ENCODE measurements at regions of chr22 and their contacts with region 1.

Region 1: DNA sequence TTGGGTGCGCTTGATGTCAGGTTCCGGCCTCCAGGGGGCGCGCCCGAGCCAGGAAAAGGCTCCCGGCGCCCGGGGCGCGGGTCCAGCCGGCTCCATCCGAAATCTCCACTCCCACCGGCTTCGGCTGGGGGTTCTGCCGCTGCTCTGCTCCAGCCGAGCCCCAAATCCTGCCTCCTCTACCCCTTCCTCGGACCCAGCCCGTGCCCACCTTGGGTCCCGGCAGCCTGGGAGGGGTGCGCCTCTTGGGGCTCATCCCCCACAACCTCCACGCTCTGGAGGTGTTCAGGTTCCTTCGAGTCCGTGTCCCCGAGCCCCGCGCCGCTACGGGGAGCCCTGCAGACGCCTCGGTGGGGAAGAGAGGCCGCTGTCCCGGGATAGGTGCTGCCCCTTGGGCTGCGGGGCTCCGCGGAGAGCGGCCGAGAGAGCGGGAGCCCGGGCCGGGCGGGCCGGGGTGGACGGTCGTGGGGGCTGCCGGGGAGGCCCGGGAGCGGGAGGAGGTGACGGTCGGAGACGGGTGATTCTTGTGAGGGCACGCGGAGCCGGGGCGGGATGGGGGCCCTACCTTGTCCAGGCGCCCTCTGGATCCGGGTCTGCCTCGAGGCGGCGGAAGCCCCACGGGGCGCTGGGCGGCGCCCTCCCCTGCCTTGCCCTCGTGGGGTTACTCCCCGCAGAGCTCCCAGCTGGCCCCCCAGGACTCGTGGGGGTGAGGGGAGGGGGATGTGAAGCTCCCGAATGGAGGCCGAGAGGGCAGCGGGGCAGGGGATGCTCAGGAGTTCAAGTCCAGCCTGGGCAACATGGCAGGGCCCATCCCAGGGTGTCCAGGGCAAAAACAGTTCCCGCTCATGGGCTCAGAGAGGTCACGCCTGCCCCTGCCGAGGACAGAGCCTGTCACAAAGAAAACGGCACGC is 13.2 kb upstream of the CYB5R3 start:
- DNase-seq: peak; percentile 86 to 91
- ATAC-seq: peak; percentile 89 to 97 (median 94)
- H3K4me3 ChIP-seq: peak overlapping the region; percentile 44 to 94 (median 62)
- H3K27ac ChIP-seq: peak overlapping the region in 9 of 10 donors; percentile 24 to 81 (median 70)
- H3K4me1 ChIP-seq: peaks cover 0 to 17% (median 11%) of the 10 kb centered on the region in 9 donors
- H3K27me3 ChIP-seq: peaks cover 0 to 10% (median 0%) of the 10 kb centered on the region in 7 donors
- CTCF ChIP-seq: peak; percentile 38 to 92 (median 86)

Region 2: DNA sequence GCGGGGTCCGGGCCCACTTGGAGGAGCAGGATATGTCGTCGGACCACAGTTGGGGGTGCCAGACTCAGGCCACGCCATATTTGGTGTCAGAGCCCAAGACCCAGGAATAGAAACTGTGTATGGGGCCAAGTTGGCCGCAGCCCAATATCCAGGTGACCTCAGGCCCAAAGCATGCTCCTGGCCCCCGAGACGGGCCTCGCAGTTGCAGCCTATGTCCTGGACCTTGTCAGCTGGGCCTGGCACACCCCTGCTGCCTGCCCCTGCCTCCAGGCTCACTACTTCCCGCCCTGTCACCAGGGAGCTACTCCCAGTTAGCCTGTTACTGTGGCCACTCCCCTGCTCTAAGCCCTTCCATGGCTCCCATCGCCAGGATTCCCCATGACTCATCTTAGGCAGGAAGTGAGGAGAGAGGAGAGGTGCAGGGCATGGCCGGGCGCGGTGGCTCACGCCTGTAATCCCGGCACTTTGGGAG is 35.2 kb after region 1 on chr22:
- intact Hi-C with region 1: no loop called
- DNase-seq: peak; percentile 88 to 93
- ATAC-seq: peak; percentile 81 to 89 (median 88)
- H3K4me3 ChIP-seq: no peak overlapping the region
- H3K27ac ChIP-seq: peak overlapping the region; percentile 85 to 97 (median 94)
- H3K4me1 ChIP-seq: peaks cover 42 to 92% (median 75%) of the 10 kb centered on the region in 9 donors
- H3K27me3 ChIP-seq: no peaks in the 10 kb centered on the region
- CTCF ChIP-seq: no peak

Region 3: GRCh38 chr22:42717197-42717928 is 55.0 kb after region 1 on chr22:
- intact Hi-C with region 1: loop called in 4 of 10 experiments (anchors 5 to 10 kb)
- DNase-seq: no peak
- ATAC-seq: peak in 4 of 8 donors; percentile 18 to 29 (median 20)
- H3K4me3 ChIP-seq: peak overlapping the region in 4 of 10 donors; percentile 25 to 99 (median 63)
- H3K27ac ChIP-seq: peak overlapping the region; percentile 15 to 99 (median 86)
- H3K4me1 ChIP-seq: peaks cover 22 to 80% (median 65%) of the 10 kb centered on the region in 9 donors
- H3K27me3 ChIP-seq: peaks cover 0 to 45% (median 0%) of the 10 kb centered on the region in 7 donors
- CTCF ChIP-seq: no peak

Region 4: DNA sequence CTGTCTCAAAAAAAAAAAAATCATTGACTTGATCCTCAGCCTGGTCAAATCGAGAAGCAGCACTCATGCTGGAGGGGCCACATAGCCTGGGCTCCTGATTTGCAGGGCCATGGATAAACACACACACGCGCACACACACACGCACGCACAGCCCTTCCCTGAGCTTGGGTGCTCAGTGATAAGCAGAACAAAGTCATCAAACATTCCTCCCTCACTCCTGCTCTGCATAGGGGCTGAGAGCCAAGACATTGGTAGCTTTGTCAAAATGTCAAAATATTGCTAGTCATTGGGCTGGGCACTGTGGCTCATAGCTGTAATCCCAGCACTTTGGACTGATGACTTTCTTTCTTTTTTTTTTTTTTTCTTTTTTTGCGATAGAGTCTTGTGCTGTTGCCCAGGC is 92.3 kb after region 1 on chr22:
- intact Hi-C with region 1: loop called in 1 of 10 experiments (anchors 5 kb)
- DNase-seq: no peak
- ATAC-seq: peak in 2 of 8 donors; percentile 19 to 30
- H3K4me3 ChIP-seq: no peak overlapping the region
- H3K27ac ChIP-seq: peak overlapping the region in 3 of 10 donors; percentile 5 to 46 (median 14)
- H3K4me1 ChIP-seq: peaks cover 6 to 38% (median 16%) of the 10 kb centered on the region in 9 donors
- H3K27me3 ChIP-seq: no peaks in the 10 kb centered on the region
- CTCF ChIP-seq: no peak

Region 5: DNA sequence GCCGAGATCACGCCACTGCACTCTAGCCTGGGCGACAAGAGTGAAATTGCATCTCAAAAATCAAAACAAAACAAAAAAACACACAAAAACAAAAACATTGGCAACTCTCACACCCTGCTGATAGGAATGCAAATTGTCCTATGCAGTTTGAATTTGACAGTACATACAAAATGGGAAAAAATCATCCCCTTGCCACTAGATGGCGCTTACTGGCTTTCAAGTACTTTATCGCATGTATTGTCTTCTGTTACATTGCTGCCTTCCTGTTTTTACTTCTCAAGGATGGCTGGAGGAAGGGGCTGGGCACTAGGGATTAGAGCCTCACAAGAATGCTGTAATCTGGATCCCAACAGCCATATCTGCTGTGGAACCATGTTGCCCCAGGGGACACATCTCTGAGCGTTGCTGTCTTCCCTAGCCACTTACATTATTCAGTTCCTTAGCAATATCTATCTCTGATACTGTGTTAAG is 117.7 kb after region 1 on chr22:
- intact Hi-C with region 1: loop called in 1 of 10 experiments (anchors 5 kb)
- DNase-seq: peak in 1 of 2 donors; percentile 88
- ATAC-seq: peak; percentile 63 to 91 (median 87)
- H3K4me3 ChIP-seq: no peak overlapping the region
- H3K27ac ChIP-seq: peak overlapping the region in 4 of 10 donors; percentile 8 to 35 (median 29)
- H3K4me1 ChIP-seq: peaks cover 0 to 9% (median 4%) of the 10 kb centered on the region in 9 donors
- H3K27me3 ChIP-seq: no peaks in the 10 kb centered on the region
- CTCF ChIP-seq: peak; percentile 78 to 92 (median 84)

Region 6: GRCh38 chr22:42794551-42795510 is 132.5 kb after region 1 on chr22:
- intact Hi-C with region 1: loop called in 3 of 10 experiments (anchors 10 kb)
- DNase-seq: no peak
- ATAC-seq: no peak
- H3K4me3 ChIP-seq: no peak overlapping the region
- H3K27ac ChIP-seq: peak overlapping the region in 2 of 10 donors; percentile 31 to 48
- H3K4me1 ChIP-seq: peaks cover 6 to 49% (median 24%) of the 10 kb centered on the region in 9 donors
- H3K27me3 ChIP-seq: no peaks in the 10 kb centered on the region
- CTCF ChIP-seq: peak in 3 of 9 donors; percentile 16 to 30 (median 22)

Region 7: GRCh38 chr22:42814215-42814614 is 151.8 kb after region 1 on chr22:
- intact Hi-C with region 1: loop called in 6 of 10 experiments (anchors 2 to 10 kb)
- DNase-seq: no peak
- ATAC-seq: no peak
- H3K4me3 ChIP-seq: no peak overlapping the region
- H3K27ac ChIP-seq: peak overlapping the region in 1 of 10 donors; percentile 11
- H3K4me1 ChIP-seq: peaks cover 0 to 17% (median 0%) of the 10 kb centered on the region in 9 donors
- H3K27me3 ChIP-seq: no peaks in the 10 kb centered on the region
- CTCF ChIP-seq: no peak

Region 8: GRCh38 chr22:42820066-42820763 is 157.8 kb after region 1 on chr22:
- intact Hi-C with region 1: loop called in 8 of 10 experiments (anchors 2 to 10 kb)
- DNase-seq: no peak
- ATAC-seq: peak in 4 of 8 donors; percentile 40 to 74 (median 64)
- H3K4me3 ChIP-seq: no peak overlapping the region
- H3K27ac ChIP-seq: peak overlapping the region in 5 of 10 donors; percentile 6 to 49 (median 21)
- H3K4me1 ChIP-seq: peaks cover 0 to 16% (median 9%) of the 10 kb centered on the region in 9 donors
- H3K27me3 ChIP-seq: no peaks in the 10 kb centered on the region
- CTCF ChIP-seq: peak in 8 of 9 donors; percentile 54 to 80 (median 69)